PC-3 (cell line): ENCODE measurements at regions of chr9 and their contacts with region 1.

Region 1: DNA sequence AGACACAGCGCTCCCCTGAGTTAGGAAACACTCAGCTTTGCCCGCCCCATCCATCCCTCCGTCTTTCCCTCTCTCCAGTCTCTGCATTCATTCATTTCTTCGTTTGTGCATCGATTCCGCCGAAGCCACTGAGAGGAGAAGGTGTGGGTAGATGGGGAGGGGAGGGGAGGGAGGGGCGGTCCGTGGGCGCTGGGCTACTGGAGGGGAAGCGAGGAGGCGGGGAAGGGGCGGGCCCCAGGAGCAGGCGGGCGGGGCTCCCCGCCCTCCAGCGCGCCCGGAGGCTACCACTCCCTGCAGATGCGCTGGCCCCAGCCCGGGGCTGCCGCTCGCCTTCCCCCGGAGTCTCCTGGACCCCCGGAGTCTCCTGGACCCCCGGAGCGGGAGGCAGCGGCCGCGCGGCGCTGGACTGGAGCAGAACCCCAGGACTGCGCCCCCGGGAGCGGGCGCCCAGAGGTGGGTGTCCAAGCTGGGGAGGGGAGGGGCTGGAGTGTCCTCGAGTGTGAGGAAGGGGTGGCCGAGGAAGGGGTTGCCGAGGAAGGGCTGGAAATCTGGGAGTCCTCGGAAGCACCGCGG is 159.5 kb downstream of the C9orf152 start:
- DNase-seq: peak; percentile 65
- ATAC-seq: peak; percentile 63
- H3K4me3 ChIP-seq: peak overlapping the region; percentile 99
- H3K27ac ChIP-seq: peak overlapping the region; percentile 65
- H3K4me1 ChIP-seq: peaks cover 14% of the 10 kb centered on the region
- H3K27me3 ChIP-seq: no peaks in the 10 kb centered on the region
- CTCF ChIP-seq: no peak

Region 2: GRCh38 chr9:109652964-109653363 is 395.5 kb before region 1 on chr9:
- CTCF ChIA-PET with region 1: interaction called, 12 read pairs
- POLR2A ChIA-PET with region 1: no interaction called
- intact Hi-C with region 1: no loop called
- DNase-seq: peak; percentile 76
- ATAC-seq: peak; percentile 82
- H3K4me3 ChIP-seq: 0 out of 2 replicates have a peak overlapping the region, but pooled peaks have one; percentile 2
- H3K27ac ChIP-seq: peak overlapping the region; percentile 63
- H3K4me1 ChIP-seq: peaks cover 20% of the 10 kb centered on the region
- H3K27me3 ChIP-seq: no peaks in the 10 kb centered on the region
- CTCF ChIP-seq: peak; percentile 82

Region 3: DNA sequence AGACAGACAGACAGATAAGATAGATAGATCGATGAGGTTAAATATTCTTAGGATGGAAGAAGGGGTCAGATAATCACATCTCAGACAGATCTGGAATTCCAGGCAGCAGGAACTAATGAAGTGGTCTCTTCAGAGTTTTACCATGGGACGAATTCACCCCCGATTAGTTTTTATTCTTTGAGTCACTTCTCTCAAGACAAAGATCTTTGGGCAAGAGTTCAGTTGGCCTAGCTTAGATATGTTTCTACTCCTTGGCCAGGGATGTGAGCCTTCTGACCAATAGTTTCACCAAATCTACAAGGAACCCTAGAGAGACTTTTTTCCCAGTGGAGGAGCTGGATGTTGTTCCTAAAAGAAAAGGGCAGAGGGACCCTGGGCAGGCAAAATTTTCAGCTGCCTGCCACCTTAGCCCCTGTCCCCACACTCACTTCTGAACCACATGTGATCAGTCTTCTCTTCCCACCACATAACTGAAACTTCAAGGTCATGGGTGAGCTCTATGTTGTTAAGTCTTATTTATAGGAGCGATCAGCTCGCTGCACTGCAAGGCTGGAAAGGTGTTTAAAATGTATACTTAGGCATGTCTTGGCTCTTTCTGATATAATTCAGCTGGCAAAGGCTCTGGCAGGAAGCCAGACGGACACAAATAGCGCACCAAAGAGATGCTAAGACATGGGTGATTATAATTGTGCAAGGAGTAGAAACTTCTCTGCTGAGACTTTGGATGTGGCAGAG is 135.6 kb before region 1 on chr9:
- CTCF ChIA-PET with region 1: no interaction called
- POLR2A ChIA-PET with region 1: interaction called, 4 read pairs
- intact Hi-C with region 1: loop called (anchors 2 kb)
- DNase-seq: peak; percentile 22
- ATAC-seq: peak; percentile 2; the same call in 1 of the 2 replicates
- H3K4me3 ChIP-seq: 0 out of 2 replicates have a peak overlapping the region, but pooled peaks have one; percentile 12
- H3K27ac ChIP-seq: peak overlapping the region; percentile 99
- H3K4me1 ChIP-seq: peaks cover 40% of the 10 kb centered on the region
- H3K27me3 ChIP-seq: no peaks in the 10 kb centered on the region
- CTCF ChIP-seq: no peak

Region 4: GRCh38 chr9:109934857-109935215 is 113.7 kb before region 1 on chr9:
- CTCF ChIA-PET with region 1: no interaction called
- POLR2A ChIA-PET with region 1: no interaction called
- intact Hi-C with region 1: no loop called
- DNase-seq: no peak
- ATAC-seq: no peak
- H3K4me3 ChIP-seq: no peak overlapping the region
- H3K27ac ChIP-seq: no peak overlapping the region
- H3K4me1 ChIP-seq: no peaks in the 10 kb centered on the region
- H3K27me3 ChIP-seq: no peaks in the 10 kb centered on the region
- CTCF ChIP-seq: no peak

Region 5: DNA sequence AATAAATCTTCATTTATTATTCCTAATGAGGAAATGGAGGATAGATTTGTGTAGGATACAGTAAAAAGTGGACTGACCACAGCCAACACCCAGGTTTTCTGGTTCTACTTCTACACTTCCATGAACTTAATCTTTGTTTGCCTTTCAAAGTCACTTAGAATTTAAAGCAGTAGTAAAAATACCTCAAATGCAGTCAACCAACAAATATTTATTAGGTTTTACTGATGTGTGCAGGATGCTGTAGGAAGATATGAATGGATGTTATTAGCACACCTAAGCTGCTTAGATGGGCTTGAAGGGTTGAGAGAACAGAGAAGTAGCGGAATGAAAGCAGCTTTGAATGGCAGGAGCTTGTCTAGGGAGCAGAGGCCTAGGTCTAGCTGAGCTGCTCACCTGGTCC is 67.4 kb before region 1 on chr9:
- CTCF ChIA-PET with region 1: no interaction called
- POLR2A ChIA-PET with region 1: no interaction called
- intact Hi-C with region 1: loop called (anchors 2 kb)
- DNase-seq: peak; percentile 81
- ATAC-seq: peak; percentile 93
- H3K4me3 ChIP-seq: no peak overlapping the region
- H3K27ac ChIP-seq: peak overlapping the region; percentile 48
- H3K4me1 ChIP-seq: peaks cover 18% of the 10 kb centered on the region
- H3K27me3 ChIP-seq: no peaks in the 10 kb centered on the region
- CTCF ChIP-seq: no peak

Region 6: GRCh38 chr9:109986521-109986991 is 61.9 kb before region 1 on chr9:
- CTCF ChIA-PET with region 1: no interaction called
- POLR2A ChIA-PET with region 1: no interaction called
- intact Hi-C with region 1: loop called (anchors 2 kb)
- DNase-seq: peak; percentile 69
- ATAC-seq: peak; percentile 91
- H3K4me3 ChIP-seq: no peak overlapping the region; the same call in 1 of the 2 replicates
- H3K27ac ChIP-seq: peak overlapping the region; percentile 42
- H3K4me1 ChIP-seq: peaks cover 10% of the 10 kb centered on the region
- H3K27me3 ChIP-seq: no peaks in the 10 kb centered on the region
- CTCF ChIP-seq: no peak